Pancreas (tissue), 10 donors: ENCODE measurements at regions of chr6 and their contacts with region 1.

Region 1: DNA sequence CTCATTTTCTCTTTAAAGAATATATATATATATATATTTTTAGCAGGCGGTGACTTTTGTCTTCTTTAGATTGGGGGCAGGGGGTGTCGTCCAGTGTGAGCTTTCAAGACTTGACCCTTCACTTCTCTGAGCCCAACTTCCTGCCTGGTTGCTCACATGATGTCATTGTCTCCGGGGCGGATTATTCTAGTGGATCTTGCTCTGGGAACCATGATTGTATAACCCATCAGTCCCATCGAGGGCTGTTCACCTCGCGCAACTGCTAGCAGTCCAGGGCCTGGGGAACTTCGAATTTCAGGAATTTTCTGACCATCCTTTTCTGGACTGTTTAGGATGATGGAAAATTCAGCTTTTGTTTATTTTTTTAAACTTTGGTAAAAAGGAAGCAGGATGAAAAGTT is 1.0 kb downstream of the IGF2R start:
- DNase-seq: peak in 3 of 6 donors; percentile 40 to 63 (median 47)
- ATAC-seq: peak; percentile 47 to 80 (median 64)
- H3K4me3 ChIP-seq: peak overlapping the region; percentile 71 to 99 (median 93)
- H3K27ac ChIP-seq: peak overlapping the region; percentile 85 to 96 (median 88)
- H3K4me1 ChIP-seq: peaks cover 3 to 25% (median 15%) of the 10 kb centered on the region in 3 donors
- H3K27me3 ChIP-seq: no peaks in the 10 kb centered on the region
- CTCF ChIP-seq: no peak

Region 2: GRCh38 chr6:160028487-160029275 is 58.8 kb after region 1 on chr6:
- intact Hi-C with region 1: loop called in 1 of 3 experiments (anchors 10 kb)
- DNase-seq: peak in 3 of 6 donors; percentile 25 to 40 (median 35)
- ATAC-seq: peak; percentile 59 to 75 (median 64)
- H3K4me3 ChIP-seq: no peak overlapping the region
- H3K27ac ChIP-seq: peak overlapping the region in 2 of 4 donors; percentile 51 to 70
- H3K4me1 ChIP-seq: peaks cover 10 to 32% (median 28%) of the 10 kb centered on the region in 3 donors
- H3K27me3 ChIP-seq: no peaks in the 10 kb centered on the region
- CTCF ChIP-seq: no peak